HepG2 (cell line): ENCODE measurements at regions of chr5 and their contacts with region 1.

Region 1: DNA sequence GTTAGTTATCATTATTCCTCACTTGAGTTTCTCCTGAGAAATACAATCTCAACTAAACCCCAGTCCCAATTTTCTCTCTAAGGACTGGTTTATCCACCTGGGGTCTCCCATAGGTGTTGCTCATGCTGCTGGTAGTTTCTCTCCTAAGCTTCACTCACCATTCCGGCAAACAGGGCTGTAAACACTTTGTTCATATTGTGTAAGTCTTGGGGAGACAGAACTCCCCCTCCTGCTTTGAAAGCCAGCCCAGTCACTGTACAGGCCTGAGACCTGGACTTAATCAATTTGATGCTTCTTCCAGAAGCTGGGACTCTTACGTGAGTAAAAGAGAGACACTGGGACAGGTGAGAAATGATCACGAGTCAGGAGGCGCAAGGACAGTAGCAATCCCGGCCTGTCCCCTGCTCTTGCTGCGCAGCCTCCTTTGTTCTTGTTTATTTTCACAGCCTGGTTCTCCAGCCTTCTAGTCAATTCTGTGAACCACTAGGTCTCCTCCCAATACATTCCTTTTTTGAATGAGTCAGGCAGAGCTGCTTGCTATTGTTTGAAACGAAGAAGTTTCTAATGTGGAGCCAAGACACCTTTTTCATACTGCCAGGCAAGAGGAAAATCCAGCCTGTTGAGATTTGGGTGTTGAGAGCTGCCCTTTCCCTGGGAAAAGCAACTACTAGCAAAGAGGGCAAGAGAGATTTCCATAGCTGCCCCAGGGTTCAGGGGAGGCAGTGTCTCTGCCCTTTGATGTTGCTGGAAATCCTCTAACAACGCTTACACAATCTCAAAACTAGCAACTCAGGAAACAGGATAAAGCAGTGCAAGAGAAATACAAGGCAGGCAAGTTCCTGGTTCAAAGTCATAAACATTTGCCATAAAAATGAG is 9.2 kb upstream of the SHROOM1 start:
- DNase-seq: peak; percentile 89
- ATAC-seq: peak; percentile 72
- H3K4me3 ChIP-seq: peak overlapping the region; percentile 36 to 68 (median 48); a peak in 5 of 6 replicates
- H3K27ac ChIP-seq: peak overlapping the region; percentile 98
- H3K4me1 ChIP-seq: peaks cover 81% of the 10 kb centered on the region
- H3K27me3 ChIP-seq: no peaks in the 10 kb centered on the region
- CTCF ChIP-seq: peak; percentile 9; the same call in 1 of the 2 replicates
- EP300 ChIP-seq: peak; percentile 43 to 91; a peak in 2 of 4 replicates
- POLR2A ChIP-seq: peak; percentile 55 to 57; a peak in 3 of 4 replicates
- RAD21 ChIP-seq: no peak

Region 2: GRCh38 chr5:132850066-132850465 is 10.4 kb after region 1 on chr5:
- CTCF ChIA-PET with region 1: no interaction called
- POLR2A ChIA-PET with region 1: interaction called, 28 read pairs
- in situ Hi-C with region 1: no loop called
- intact Hi-C with region 1: no loop called
- DNase-seq: no peak
- ATAC-seq: no peak; the same call in 2 of the 3 replicates
- H3K4me3 ChIP-seq: no peak overlapping the region
- H3K27ac ChIP-seq: peak overlapping the region; percentile 59
- H3K4me1 ChIP-seq: peaks cover 75% of the 10 kb centered on the region
- H3K27me3 ChIP-seq: no peaks in the 10 kb centered on the region
- CTCF ChIP-seq: no peak
- EP300 ChIP-seq: no peak
- POLR2A ChIP-seq: no peak
- RAD21 ChIP-seq: no peak

Region 3: GRCh38 chr5:132873119-132873929 is 33.7 kb after region 1 on chr5 and contains the start of gene LEAP2:
- CTCF ChIA-PET with region 1: no interaction called
- POLR2A ChIA-PET with region 1: interaction called, 10 read pairs
- in situ Hi-C with region 1: loop called (anchors 5 kb)
- intact Hi-C with region 1: no loop called
- DNase-seq: peak; percentile 95
- ATAC-seq: peak; percentile 82
- H3K4me3 ChIP-seq: peak within 1 kb of the TSS; percentile 52 to 76 (median 68)
- H3K27ac ChIP-seq: peak within 1 kb of the TSS; percentile 95
- H3K4me1 ChIP-seq: peaks cover 90% of the 10 kb centered on the region
- H3K27me3 ChIP-seq: no peaks in the 10 kb centered on the region; a peak in 1 of 5 replicates
- CTCF ChIP-seq: peak; percentile 9
- EP300 ChIP-seq: peak; percentile 43 to 90; a peak in 3 of 4 replicates
- POLR2A ChIP-seq: peak; percentile 94 to 95
- RAD21 ChIP-seq: no peak
- total RNA-seq, gene LEAP2: 19.8 and 23.9 TPM in 2 replicates

Region 4: DNA sequence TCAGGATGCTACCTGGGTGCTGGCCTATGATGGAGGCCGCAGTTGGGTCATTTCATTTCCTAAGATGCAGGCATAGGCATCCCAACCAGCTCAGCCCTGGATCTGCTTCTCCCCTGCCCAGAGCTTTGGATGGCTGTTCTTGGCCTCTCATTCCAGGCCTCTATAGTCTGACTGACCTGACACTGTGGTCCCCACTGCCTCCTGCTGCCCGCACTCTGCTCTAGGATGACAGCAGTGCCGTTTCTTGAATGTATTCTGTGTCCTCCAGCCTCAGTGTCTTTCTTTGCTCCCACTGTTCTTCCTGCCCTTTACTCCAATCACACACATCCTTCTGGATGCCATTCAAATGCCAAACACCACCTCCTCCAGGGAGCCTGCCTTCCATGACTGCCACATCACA is 447.8 kb after region 1 on chr5:
- CTCF ChIA-PET with region 1: no interaction called
- POLR2A ChIA-PET with region 1: no interaction called
- in situ Hi-C with region 1: no loop called
- intact Hi-C with region 1: no loop called
- DNase-seq: peak; percentile 12
- ATAC-seq: peak; percentile 82
- H3K4me3 ChIP-seq: no peak overlapping the region
- H3K27ac ChIP-seq: no peak overlapping the region
- H3K4me1 ChIP-seq: peaks cover 8% of the 10 kb centered on the region; the same call in 1 of the 2 replicates
- H3K27me3 ChIP-seq: peaks cover 0 to 5% of the 10 kb centered on the region in 2 experiments; a peak in 4 of 5 replicates
- CTCF ChIP-seq: peak; percentile 83
- EP300 ChIP-seq: no peak
- POLR2A ChIP-seq: no peak
- RAD21 ChIP-seq: peak; percentile 50